ENCODE measurements at regions of chr5 and their contacts with region 1.

Region 1: GRCh38 chr5:115634343-115635132 is 8.7 kb upstream of the TMED7 start:
- DNase-seq: peak; percentile 88
- H3K4me3 Mint-ChIP-seq: peak overlapping the region; percentile 64
- H3K27ac Mint-ChIP-seq: peak overlapping the region; percentile 43
- H3K4me1 Mint-ChIP-seq: peaks cover 40% of the 10 kb centered on the region
- H3K27me3 Mint-ChIP-seq: peaks cover 45% of the 10 kb centered on the region

Region 2: DNA sequence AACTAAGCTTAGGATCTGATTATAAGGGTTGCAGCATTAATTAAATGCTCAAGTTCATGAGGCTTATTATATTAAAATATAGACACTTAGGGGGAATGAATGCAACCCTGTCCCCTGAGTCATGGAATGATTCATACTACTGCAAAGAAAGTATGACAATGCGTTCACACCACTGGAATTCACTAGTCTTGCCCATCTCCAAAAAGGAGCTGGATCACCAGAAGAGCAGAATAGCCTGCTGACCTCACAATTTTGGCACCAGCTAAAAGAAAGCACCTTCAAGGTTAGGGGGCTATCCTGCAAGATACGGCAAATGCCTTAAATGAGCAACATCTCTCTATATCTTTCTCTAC is 23.3 kb after region 1 on chr5:
- CTCF ChIA-PET with region 1: no interaction called
- POLR2A ChIA-PET with region 1: no interaction called
- DNase-seq: no peak
- H3K4me3 Mint-ChIP-seq: no peak overlapping the region
- H3K27ac Mint-ChIP-seq: no peak overlapping the region
- H3K4me1 Mint-ChIP-seq: no peaks in the 10 kb centered on the region
- H3K27me3 Mint-ChIP-seq: peaks cover 33% of the 10 kb centered on the region

Region 3: DNA sequence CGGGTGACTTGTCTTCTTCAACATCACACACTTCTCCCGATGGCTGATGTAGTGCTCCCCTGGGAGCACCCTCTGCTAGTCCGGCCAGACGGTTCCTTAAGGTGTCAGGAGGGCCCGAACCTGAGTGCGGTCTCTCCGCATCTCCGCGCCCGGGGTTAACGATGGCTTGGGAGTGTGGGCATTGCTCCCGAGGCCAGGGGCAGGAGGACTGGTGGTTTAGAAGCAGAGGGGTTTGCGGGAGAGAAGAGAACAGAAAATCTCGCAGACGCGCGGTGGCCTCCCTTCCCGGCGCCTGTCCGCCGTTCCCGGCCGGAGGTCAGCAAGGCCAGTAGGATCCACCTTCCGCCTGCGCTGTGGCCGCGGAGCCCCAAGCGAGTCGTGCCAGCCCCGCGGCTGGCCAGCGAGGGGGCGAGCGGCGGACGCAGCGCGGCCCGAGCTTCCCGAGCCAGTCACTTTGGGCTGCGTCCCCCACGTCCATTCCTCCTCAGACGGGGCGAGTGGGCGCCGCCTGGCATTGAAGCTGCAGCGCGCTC is 181.2 kb after region 1 on chr5:
- CTCF ChIA-PET with region 1: interaction called, 13 read pairs
- POLR2A ChIA-PET with region 1: no interaction called
- DNase-seq: no peak
- H3K4me3 Mint-ChIP-seq: peak overlapping the region; percentile 59
- H3K27ac Mint-ChIP-seq: no peak overlapping the region
- H3K4me1 Mint-ChIP-seq: peaks cover 40% of the 10 kb centered on the region
- H3K27me3 Mint-ChIP-seq: peaks cover 82% of the 10 kb centered on the region

Region 4: GRCh38 chr5:115841382-115842088 is 207.0 kb after region 1 on chr5 and contains the starts of genes AP3S1 and ATG12:
- CTCF ChIA-PET with region 1: interaction called, 8 read pairs
- POLR2A ChIA-PET with region 1: interaction called, 18 read pairs
- DNase-seq: peak; percentile 91
- H3K4me3 Mint-ChIP-seq: peak within 1 kb of the TSS; percentile 88
- H3K27ac Mint-ChIP-seq: peak within 1 kb of the TSS; percentile 93
- H3K4me1 Mint-ChIP-seq: peaks cover 54% of the 10 kb centered on the region
- H3K27me3 Mint-ChIP-seq: no peaks in the 10 kb centered on the region
- total RNA-seq, gene AP3S1: 73.5 to 87.0 TPM
- total RNA-seq, gene ATG12: 45.5 to 49.0 TPM

Region 5: GRCh38 chr5:115857636-115858309 is 223.2 kb after region 1 on chr5:
- CTCF ChIA-PET with region 1: no interaction called
- POLR2A ChIA-PET with region 1: no interaction called
- DNase-seq: no peak
- H3K4me3 Mint-ChIP-seq: no peak overlapping the region
- H3K27ac Mint-ChIP-seq: no peak overlapping the region
- H3K4me1 Mint-ChIP-seq: peaks cover 13% of the 10 kb centered on the region
- H3K27me3 Mint-ChIP-seq: no peaks in the 10 kb centered on the region

Region 6: DNA sequence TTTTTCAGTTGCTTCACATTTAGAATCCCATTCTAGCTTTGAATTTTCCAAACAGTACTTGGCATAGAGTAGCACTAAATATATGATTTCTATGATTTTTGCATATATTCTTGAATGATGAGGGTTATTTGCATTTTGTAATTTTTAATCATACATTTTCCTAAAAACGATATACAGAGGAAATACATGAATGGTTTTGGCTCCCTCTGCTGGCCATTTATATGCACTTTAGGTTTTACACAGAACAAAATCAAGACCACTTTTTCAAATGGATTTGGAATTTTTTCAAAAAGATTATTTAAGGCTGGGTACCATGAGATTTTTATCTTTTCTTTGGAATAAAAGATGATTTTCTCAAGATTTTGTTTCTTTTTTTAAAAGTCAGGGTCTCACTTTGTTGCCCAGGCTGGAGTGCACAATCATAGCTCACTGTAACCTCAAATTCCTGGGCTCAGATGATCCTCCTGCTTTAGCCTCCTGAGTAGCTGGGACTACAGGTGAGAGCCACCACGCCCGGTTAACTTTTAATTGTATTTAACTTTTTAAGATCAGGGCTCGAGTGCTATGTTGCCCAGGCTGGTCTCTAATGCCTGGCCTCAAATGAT is 433.6 kb after region 1 on chr5:
- CTCF ChIA-PET with region 1: interaction called, 16 read pairs
- POLR2A ChIA-PET with region 1: no interaction called
- DNase-seq: peak; percentile 25
- H3K4me3 Mint-ChIP-seq: no peak overlapping the region
- H3K27ac Mint-ChIP-seq: no peak overlapping the region
- H3K4me1 Mint-ChIP-seq: no peaks in the 10 kb centered on the region
- H3K27me3 Mint-ChIP-seq: peaks cover 41% of the 10 kb centered on the region

Measured in activated CD4-positive, alpha-beta memory T cell treated with anti-CD3 and anti-CD28 coated beads, Interleukin-2, amount 10 ng/mL, durations not matched to agents 7 days and 5 days (primary cell).